ENCODE measurements at regions of chr1 and their contacts with region 1.

Region 1: GRCh38 chr1:19398309-19398760 is 86.2 kb downstream of the SLC66A1 start:
- DNase-seq: peak; percentile 96
- H3K4me3 ChIP-seq: no peak overlapping the region
- CTCF ChIP-seq: peak; percentile 70

Region 2: GRCh38 chr1:19374083-19374801 is 24.1 kb before region 1 on chr1:
- CTCF ChIA-PET with region 1: interaction called, 11 read pairs
- POLR2A ChIA-PET with region 1: no interaction called
- DNase-seq: no peak
- H3K4me3 ChIP-seq: no peak overlapping the region
- CTCF ChIP-seq: peak; percentile 42

Region 3: DNA sequence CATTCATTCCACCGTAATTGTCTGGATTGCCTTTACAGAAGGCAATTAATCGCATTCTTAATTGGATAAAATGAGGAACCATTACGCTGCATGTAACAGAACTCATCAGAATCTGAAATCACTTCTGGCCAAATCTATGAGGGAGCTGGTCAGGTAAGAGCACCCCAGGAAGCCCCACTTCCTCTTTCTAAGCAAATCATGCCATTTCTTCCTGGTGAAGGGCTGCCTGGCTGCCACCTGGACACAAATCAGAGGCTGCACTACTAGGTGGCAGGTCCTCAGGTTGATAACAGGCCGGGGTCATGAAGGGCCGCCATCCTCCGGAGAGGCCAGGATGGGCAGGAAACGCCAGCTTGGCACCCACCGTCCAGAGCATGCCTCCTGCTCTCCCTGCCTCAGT is 13.3 kb after region 1 on chr1:
- CTCF ChIA-PET with region 1: interaction called, 19 read pairs
- POLR2A ChIA-PET with region 1: no interaction called
- DNase-seq: no peak
- H3K4me3 ChIP-seq: no peak overlapping the region
- CTCF ChIP-seq: no peak

Region 4: GRCh38 chr1:19424651-19425570 is 26.6 kb after region 1 on chr1:
- CTCF ChIA-PET with region 1: interaction called, 10 read pairs
- POLR2A ChIA-PET with region 1: no interaction called
- DNase-seq: no peak
- H3K4me3 ChIP-seq: no peak overlapping the region
- CTCF ChIP-seq: no peak

Region 5: GRCh38 chr1:19436716-19437476 is 38.6 kb after region 1 on chr1:
- CTCF ChIA-PET with region 1: interaction called, 20 read pairs
- POLR2A ChIA-PET with region 1: interaction called, 3 read pairs
- DNase-seq: no peak
- H3K4me3 ChIP-seq: no peak overlapping the region
- CTCF ChIP-seq: no peak

Measured in AG04449 (cell line).